ENCODE measurements at regions of chr4 and their contacts with region 1.

Region 1: DNA sequence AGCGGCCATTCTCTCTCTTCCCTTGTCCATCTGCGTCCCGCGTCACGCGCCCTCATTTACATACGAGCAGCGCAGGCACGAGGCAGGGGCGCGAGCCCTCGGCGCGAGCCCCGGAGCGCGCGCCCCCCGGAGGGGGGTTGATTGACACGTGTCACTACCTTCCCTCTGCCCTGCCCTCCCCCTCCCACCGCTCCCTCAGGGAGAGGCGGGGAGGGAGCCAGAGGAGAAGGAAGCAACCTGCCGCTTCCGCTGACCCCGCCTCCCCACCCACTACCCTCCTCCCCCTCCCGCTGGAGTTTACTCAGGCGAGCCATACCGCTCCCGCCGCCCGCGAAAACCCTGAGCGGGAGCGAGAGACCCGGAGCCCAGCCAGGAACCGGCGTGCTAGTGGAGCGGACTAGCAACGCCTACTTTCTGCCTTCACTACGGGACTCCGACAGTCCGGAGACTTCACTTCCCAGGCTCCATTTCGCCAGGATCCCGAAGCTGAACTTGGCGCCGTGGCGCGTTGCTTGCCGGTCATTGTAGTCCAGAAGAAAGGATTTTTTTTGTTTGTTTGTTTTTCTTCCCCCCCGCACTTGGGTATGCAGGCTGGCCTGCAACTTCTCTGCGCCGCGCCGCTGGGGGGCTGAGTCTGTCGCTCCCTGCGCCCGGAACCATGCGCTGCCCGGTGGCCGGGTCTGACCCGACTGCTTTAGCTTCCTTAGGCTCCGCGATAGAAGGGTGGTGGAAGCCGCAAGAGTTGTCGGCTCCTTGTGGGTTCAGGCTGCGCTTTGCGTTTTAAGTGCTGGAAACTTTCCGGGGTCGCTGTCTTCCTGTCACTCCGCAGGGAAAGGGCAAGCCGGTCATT is at the start of gene LCORL:
- DNase-seq: peak; percentile 91 to 95
- ATAC-seq: peak; percentile 92
- H3K4me3 ChIP-seq: peak within 1 kb of the TSS; percentile 70 to 84 (median 78)
- H3K27ac ChIP-seq: peak within 1 kb of the TSS; percentile 88 to 97 (median 96)
- H3K4me1 ChIP-seq: peaks cover 13 to 24% of the 10 kb centered on the region in 2 donors
- H3K27me3 ChIP-seq: no peaks in the 10 kb centered on the region
- CTCF ChIP-seq: peak in 2 of 5 experiments; percentile 33 to 38
- POLR2A ChIP-seq: peak; percentile 97
- total RNA-seq, gene LCORL: 12.8 to 34.7 (median 26.1) TPM

Region 2: DNA sequence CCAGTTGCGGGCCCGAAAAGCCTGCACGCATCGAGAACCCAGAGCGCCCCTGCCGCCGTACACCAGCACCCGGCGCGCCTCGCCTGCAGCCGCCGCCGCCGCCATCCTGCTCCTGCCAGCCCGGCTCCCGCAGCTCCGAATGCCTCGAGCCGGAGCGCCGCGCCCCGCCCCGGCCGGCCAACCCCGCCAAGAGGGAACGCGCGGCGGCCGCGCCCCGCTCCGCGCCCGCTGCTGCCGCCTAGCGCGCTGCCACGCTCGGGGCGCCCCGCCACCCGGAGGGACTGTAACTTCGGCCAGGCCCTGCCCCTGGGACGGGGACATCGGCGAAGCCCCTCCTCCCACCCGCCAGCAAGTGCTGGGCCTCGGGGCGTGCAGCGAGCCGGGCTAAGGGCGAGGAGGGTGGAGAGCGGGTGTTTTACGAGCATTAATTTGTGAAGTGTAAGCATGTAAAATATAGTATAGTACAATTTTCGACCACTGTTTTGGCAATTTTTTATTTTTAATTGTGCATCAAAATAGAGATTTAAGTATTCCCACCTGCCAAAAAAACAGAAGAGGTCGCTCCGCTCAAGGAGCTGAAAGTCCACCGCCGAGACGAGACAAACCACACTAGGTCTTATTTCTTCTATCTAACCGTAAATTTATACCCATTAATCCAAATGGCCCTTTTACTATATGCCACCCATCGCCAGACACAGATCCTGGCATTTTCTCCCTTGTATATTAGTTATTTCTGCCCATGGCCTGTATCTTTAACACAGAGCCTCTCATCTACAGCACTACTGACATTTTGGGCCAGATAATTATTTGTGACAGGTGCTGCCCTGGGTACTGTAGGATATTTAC is 509.8 kb before region 1 on chr4 and contains the start of gene QDPR:
- in situ Hi-C with region 1: no loop called
- intact Hi-C with region 1: loop called (anchors 5 kb)
- DNase-seq: peak; percentile 37 to 75
- ATAC-seq: peak; percentile 80 to 84
- H3K4me3 ChIP-seq: peak within 1 kb of the TSS; percentile 69 to 96 (median 74)
- H3K27ac ChIP-seq: peak within 1 kb of the TSS; percentile 74 to 85 (median 78)
- H3K4me1 ChIP-seq: peaks cover 8 to 23% of the 10 kb centered on the region in 2 donors
- H3K27me3 ChIP-seq: no peaks in the 10 kb centered on the region
- CTCF ChIP-seq: peak in 4 of 5 experiments; percentile 15 to 50 (median 36)
- POLR2A ChIP-seq: peak in 1 of 2 donors; percentile 6
- total RNA-seq, gene QDPR: 6.9 to 15.6 (median 9.1) TPM